PC-9 (cell line): ENCODE measurements at regions of chr17 and their contacts with region 1.

Region 1: GRCh38 chr17:55452139-55452790 is 30.6 kb upstream of the MMD start:
- DNase-seq: peak in 1 of 2 experiments; percentile 42
- H3K4me3 ChIP-seq: no peak overlapping the region
- H3K27ac ChIP-seq: 0 out of 2 replicates have a peak overlapping the region, but pooled peaks have one; percentile 0
- H3K4me1 ChIP-seq: peaks cover 71% of the 10 kb centered on the region
- H3K27me3 ChIP-seq: no peaks in the 10 kb centered on the region
- CTCF ChIP-seq: no peak

Region 2: DNA sequence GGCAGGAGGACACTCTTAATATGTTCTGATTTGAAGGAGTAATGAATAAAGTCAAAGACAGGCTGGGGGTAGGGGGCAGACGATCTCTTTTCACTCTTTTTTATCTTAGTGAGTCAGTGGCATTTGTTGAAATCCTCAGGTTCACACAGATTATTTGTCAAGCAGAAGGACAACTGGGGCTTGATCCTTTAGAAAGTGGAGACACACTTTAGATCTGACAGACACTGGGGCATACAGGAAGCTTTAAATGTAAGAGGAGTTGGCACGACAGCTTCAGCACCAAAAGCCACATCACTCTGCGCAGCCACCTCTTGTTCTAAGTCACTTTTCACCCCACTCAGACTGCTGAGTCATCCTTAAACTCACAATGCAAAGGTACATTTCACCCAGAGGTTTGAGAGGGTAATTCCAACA is 362.2 kb before region 1 on chr17:
- CTCF ChIA-PET with region 1: interaction called, 12 read pairs
- POLR2A ChIA-PET with region 1: no interaction called
- intact Hi-C with region 1: no loop called
- DNase-seq: peak; percentile 23 to 41
- H3K4me3 ChIP-seq: no peak overlapping the region
- H3K27ac ChIP-seq: peak overlapping the region; percentile 56
- H3K4me1 ChIP-seq: peaks cover 28% of the 10 kb centered on the region
- H3K27me3 ChIP-seq: no peaks in the 10 kb centered on the region
- CTCF ChIP-seq: no peak

Region 3: DNA sequence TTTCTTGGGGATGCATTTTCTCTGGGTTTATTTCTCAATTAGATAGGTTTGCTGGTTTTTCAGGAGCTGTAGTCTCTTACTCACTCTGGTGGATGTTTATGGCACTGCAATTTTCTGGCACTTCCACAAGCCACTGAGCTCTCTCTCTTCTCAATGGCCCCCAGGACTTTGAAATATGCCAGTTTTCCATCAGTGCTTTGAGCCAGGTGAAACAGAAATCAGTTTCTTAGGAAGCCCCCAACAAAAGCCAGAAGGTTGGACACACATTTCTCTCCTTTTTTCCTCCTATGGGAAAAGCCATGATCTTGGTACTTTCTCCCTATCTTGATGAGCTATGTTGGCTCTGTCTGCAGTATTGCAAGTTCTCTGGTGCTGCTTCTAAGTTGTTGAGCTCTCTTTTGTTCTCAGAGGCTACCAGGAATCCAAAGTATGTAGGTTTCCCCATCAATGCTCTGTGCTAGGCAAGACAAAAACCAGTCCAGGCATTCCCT is 149.7 kb after region 1 on chr17:
- CTCF ChIA-PET with region 1: no interaction called
- POLR2A ChIA-PET with region 1: no interaction called
- intact Hi-C with region 1: no loop called
- DNase-seq: peak in 1 of 2 experiments; percentile 39
- H3K4me3 ChIP-seq: no peak overlapping the region
- H3K27ac ChIP-seq: no peak overlapping the region
- H3K4me1 ChIP-seq: no peaks in the 10 kb centered on the region
- H3K27me3 ChIP-seq: peaks cover 13% of the 10 kb centered on the region; the same call in 1 of the 2 replicates
- CTCF ChIP-seq: peak; percentile 84